ENCODE measurements at regions of chr5 and their contacts with region 1.

Region 1: DNA sequence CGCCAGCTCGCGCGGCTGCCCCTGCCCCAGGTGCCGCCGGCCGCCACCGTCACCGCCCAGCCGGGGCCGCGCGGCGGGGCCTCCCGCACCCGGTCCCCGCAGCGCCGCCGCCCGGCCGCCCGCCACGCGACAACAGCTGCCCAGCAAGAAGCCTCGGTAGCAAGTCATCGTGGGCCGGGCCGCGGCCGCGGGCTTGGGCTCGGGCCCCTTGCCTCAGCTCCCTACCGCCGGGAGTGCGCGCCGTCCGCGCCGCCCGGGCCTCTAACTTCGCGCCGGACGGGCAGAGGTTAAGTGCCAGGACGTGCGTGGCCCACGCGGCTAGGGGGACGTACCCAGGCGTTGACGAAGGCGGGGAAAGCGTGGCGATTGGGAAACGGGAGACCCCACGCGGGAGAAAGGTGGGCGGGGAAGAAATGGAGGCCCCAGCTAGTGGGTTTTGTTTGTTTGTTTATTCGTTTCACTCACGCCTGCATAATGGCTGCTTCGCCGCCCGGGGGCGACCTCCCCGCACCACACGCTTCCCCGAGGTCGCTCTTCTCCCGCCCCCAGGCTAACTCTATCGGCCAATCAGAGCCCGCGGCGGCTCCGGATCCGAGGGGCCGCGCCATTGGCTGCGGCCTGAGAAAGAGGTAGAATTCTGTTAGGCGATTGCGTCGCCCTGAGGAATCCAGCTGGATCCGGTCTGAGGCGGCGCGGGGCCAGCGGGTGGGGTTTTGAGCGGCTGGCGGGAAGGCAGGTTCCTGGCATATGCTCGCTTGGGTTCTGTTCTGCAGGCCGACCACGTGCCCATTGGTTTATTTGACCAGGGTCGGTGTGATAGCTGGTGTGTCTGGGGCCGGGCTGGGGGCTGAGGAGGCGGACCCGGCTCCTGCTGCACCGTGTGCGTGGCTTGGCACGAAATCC is at the start of gene NADK2:
- DNase-seq: peak; percentile 95
- H3K4me3 Mint-ChIP-seq: peak within 1 kb of the TSS; percentile 87
- H3K27ac Mint-ChIP-seq: peak within 1 kb of the TSS; percentile 81
- H3K4me1 Mint-ChIP-seq: peaks cover 37% of the 10 kb centered on the region
- H3K27me3 Mint-ChIP-seq: no peaks in the 10 kb centered on the region
- total RNA-seq, gene NADK2: 15.8 to 16.2 TPM

Region 2: GRCh38 chr5:36215910-36216309 is 26.0 kb before region 1 on chr5:
- CTCF ChIA-PET with region 1: interaction called, 12 read pairs
- POLR2A ChIA-PET with region 1: interaction called, 4 read pairs
- DNase-seq: no peak
- H3K4me3 Mint-ChIP-seq: no peak overlapping the region
- H3K27ac Mint-ChIP-seq: no peak overlapping the region
- H3K4me1 Mint-ChIP-seq: no peaks in the 10 kb centered on the region
- H3K27me3 Mint-ChIP-seq: no peaks in the 10 kb centered on the region

Region 3: GRCh38 chr5:36230151-36230793 is 11.6 kb before region 1 on chr5:
- CTCF ChIA-PET with region 1: interaction called, 8 read pairs
- POLR2A ChIA-PET with region 1: interaction called, 26 read pairs
- DNase-seq: no peak
- H3K4me3 Mint-ChIP-seq: no peak overlapping the region
- H3K27ac Mint-ChIP-seq: no peak overlapping the region
- H3K4me1 Mint-ChIP-seq: no peaks in the 10 kb centered on the region
- H3K27me3 Mint-ChIP-seq: no peaks in the 10 kb centered on the region

Region 4: DNA sequence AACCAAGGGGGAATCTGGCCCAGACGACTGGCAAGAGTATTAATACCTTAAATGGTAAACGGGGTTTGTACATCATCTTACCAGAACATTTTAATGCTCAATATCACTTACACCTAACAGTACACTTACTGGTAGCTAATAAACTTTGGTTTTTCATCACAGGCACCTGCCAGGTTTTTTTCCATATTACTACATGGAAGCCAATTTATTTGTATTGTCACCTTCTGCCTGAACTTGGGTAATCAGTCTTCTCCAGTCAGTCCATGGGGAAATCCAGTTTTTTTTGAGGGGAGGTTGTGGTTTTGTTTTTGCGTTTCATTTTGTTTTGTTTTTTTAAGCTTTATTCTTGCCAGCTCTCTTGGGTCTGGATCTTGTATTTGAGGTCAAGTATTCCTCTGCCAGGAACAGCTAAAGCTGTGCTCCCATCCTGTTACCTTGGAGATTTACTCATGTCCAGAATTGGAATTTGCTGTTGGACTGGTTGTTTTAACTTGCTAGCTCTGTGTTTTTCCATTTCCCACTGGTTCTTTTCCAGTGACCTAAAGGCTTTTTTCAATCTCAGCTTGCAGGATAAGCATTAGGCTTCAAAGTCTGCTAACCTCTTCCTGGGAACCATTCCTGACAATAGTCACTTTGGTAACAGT is 11.0 kb after region 1 on chr5:
- CTCF ChIA-PET with region 1: interaction called, 11 read pairs
- POLR2A ChIA-PET with region 1: interaction called, 14 read pairs
- DNase-seq: no peak
- H3K4me3 Mint-ChIP-seq: no peak overlapping the region
- H3K27ac Mint-ChIP-seq: no peak overlapping the region
- H3K4me1 Mint-ChIP-seq: no peaks in the 10 kb centered on the region
- H3K27me3 Mint-ChIP-seq: peaks cover 33% of the 10 kb centered on the region